Activated CD4-positive, alpha-beta memory T cell treated with anti-CD3 and anti-CD28 coated beads for 36 hours (primary cell): ENCODE measurements at regions of chr1 and their contacts with region 1.

Region 1: GRCh38 chr1:165392634-165393571 is 36.4 kb upstream of the LMX1A start:
- DNase-seq: peak; percentile 93
- H3K4me3 Mint-ChIP-seq: peak overlapping the region; percentile 66
- H3K27ac Mint-ChIP-seq: peak overlapping the region; percentile 81
- H3K4me1 Mint-ChIP-seq: peaks cover 20% of the 10 kb centered on the region
- H3K27me3 Mint-ChIP-seq: peaks cover 57% of the 10 kb centered on the region

Region 2: DNA sequence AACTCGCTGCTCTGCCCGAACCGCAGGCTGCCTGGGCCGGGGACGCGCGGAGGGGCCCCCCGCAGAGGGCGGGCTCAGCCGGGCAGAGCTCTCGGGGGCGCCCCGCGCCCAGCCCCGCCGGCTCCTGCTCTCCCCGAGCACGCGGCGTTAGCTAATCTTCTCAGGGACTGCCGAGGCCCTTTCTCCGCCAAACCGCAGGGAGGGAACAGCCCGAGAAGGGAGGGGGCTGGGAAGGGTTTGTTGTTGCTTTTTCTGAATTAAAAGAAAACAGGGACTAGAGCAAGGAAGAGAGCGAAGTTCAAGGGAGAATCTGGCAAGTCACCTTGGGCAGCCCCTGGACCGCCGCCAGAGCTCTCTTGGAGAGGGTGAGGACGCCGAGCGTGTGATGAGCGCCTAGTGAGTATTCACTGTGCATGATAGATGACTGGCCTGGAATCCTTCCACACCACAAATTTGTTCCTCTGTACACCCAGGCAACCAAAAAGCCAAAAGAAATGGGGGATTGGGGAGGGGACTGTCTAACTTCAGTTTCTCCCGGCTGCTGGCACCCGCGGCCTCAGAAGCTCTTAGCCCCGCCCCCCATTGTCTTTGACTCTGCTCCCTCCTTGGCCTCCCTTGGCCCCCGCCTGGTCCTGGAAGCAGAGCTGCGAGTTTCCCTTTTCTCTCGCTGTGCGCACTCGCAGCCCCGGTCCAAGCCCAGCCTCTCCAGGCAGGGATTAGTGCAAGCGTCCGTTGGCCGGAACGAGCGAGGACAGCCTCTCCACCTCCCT is 16.7 kb before region 1 on chr1:
- CTCF ChIA-PET with region 1: interaction called, 28 read pairs
- POLR2A ChIA-PET with region 1: no interaction called
- intact Hi-C with region 1: no loop called
- DNase-seq: peak; percentile 64
- H3K4me3 Mint-ChIP-seq: peak overlapping the region; percentile 50
- H3K27ac Mint-ChIP-seq: no peak overlapping the region
- H3K4me1 Mint-ChIP-seq: peaks cover 16% of the 10 kb centered on the region
- H3K27me3 Mint-ChIP-seq: peaks cover 51% of the 10 kb centered on the region

Region 3: GRCh38 chr1:165411396-165411795 is 18.5 kb after region 1 on chr1:
- CTCF ChIA-PET with region 1: interaction called, 13 read pairs
- POLR2A ChIA-PET with region 1: no interaction called
- intact Hi-C with region 1: no loop called
- DNase-seq: no peak
- H3K4me3 Mint-ChIP-seq: no peak overlapping the region
- H3K27ac Mint-ChIP-seq: no peak overlapping the region
- H3K4me1 Mint-ChIP-seq: no peaks in the 10 kb centered on the region
- H3K27me3 Mint-ChIP-seq: peaks cover 36% of the 10 kb centered on the region

Region 4: DNA sequence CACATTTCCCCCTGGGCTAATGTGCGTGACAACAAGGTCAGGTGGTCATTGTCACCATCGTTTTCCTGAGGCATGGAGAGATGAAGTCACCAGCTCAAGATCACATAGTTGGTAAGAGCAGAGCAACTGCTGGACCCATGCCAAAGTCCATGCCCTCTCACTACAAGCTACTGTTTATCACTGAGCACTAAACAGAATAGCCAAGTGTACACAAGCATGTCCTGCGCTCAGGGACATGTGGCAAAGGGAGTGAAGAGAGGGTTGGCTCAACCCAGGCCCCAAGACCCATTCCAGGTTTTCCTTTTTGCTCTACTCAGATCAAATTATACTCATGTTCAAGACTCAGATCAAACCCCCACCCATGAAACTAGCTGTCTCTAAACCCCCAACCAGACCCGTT is 171.7 kb after region 1 on chr1:
- CTCF ChIA-PET with region 1: no interaction called
- POLR2A ChIA-PET with region 1: no interaction called
- intact Hi-C with region 1: no loop called
- DNase-seq: no peak
- H3K4me3 Mint-ChIP-seq: no peak overlapping the region
- H3K27ac Mint-ChIP-seq: no peak overlapping the region
- H3K4me1 Mint-ChIP-seq: no peaks in the 10 kb centered on the region
- H3K27me3 Mint-ChIP-seq: peaks cover 17% of the 10 kb centered on the region

Region 5: DNA sequence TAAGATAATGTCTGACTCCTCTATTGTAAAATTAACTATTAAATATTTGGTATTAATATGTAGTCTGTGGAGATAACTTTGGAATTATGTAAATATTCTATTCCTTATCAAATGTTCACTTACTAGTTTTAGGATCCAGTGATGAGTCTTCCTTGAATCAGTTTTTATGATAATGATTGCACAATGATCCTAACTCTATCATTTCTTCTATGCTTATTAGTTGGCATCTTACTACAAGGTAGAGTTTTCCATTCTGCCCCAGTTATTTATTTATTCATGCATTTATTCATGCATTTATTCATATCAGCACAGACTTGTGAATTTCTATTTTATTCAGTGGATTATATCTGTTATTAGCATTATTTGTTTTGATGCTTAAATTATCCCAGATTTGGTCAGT is 230.7 kb after region 1 on chr1:
- CTCF ChIA-PET with region 1: no interaction called
- POLR2A ChIA-PET with region 1: no interaction called
- intact Hi-C with region 1: no loop called
- DNase-seq: no peak
- H3K4me3 Mint-ChIP-seq: no peak overlapping the region
- H3K27ac Mint-ChIP-seq: no peak overlapping the region
- H3K4me1 Mint-ChIP-seq: no peaks in the 10 kb centered on the region
- H3K27me3 Mint-ChIP-seq: peaks cover 10% of the 10 kb centered on the region

Region 6: DNA sequence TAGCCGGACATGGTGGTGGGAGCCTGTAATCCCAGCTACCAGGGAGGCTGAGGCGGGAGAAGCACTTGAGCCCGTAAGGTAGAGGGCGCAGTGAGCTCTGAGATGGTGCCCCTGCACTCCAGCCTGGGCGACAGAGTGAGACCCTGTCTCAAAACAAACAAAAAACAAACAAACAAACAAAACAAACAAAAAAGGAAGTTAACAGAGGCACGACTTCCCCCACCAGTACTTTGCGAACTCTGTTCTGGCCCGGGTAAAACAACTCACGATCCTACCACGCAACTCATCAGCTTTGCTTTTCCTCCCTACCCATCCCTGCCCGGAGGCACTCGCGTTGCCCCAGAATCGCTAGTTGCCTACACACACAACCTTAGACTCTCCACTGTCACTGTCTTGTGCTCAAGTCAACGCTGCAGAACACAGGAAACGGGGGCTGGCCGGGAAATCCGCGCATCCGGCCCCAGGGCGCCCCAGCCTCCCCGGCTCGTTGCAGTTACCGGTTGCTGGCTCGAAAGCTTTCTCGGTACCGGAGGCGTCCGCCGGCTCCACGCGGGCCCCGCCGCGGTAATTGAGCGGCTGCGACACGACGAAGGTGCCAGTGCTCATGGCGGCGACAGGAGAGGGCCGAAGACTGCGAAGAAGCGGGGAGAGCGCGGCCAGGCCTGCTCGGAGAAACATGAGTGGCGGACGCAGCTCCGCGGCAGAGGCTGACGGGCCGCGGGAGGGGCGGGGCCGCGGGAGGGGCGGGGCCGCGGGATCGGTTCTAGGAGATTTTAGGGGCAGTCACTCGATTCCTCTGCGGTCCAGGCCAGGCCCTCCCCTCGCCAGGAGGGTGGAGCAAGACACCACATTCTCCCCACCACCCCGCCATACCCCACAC is 305.2 kb after region 1 on chr1 and contains the start of gene ALDH9A1:
- CTCF ChIA-PET with region 1: no interaction called
- POLR2A ChIA-PET with region 1: no interaction called
- intact Hi-C with region 1: loop called (anchors 5 kb)
- DNase-seq: peak; percentile 93
- H3K4me3 Mint-ChIP-seq: peak within 1 kb of the TSS; percentile 100
- H3K27ac Mint-ChIP-seq: peak within 1 kb of the TSS; percentile 99
- H3K4me1 Mint-ChIP-seq: peaks cover 25% of the 10 kb centered on the region
- H3K27me3 Mint-ChIP-seq: no peaks in the 10 kb centered on the region
- total RNA-seq, gene ALDH9A1: 34.1 to 43.2 TPM

Region 7: DNA sequence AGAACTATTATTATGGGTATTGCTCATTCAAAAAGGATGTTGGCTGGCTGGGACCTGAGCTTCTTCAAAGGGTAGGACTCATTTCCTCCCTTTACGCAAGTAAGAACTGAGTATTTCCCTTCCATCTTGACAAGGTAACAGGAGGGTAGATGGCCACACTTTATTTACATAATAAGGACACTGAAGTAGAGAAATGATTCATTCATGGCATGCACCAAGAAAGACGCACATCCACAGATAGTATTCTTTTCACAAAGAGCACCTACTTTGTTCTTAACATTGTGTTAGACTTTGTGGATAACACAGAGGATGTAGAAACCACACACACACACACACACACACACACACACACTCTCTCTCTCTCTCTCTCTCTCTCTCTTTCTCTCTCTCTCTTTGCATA is 691.0 kb after region 1 on chr1:
- CTCF ChIA-PET with region 1: no interaction called
- POLR2A ChIA-PET with region 1: no interaction called
- intact Hi-C with region 1: loop called (anchors 5 kb)
- DNase-seq: peak; percentile 41
- H3K4me3 Mint-ChIP-seq: no peak overlapping the region
- H3K27ac Mint-ChIP-seq: peak overlapping the region; percentile 29
- H3K4me1 Mint-ChIP-seq: peaks cover 40% of the 10 kb centered on the region
- H3K27me3 Mint-ChIP-seq: no peaks in the 10 kb centered on the region